ENCODE measurements at regions of chr11 and their contacts with region 1.

Region 1: GRCh38 chr11:78961247-78961646 is 386.6 kb upstream of the NARS2 start:
- DNase-seq: peak; percentile 31
- H3K4me3 ChIP-seq: no peak overlapping the region
- H3K27ac ChIP-seq: no peak overlapping the region
- H3K4me1 ChIP-seq: peaks cover 0 to 7% (median 2%) of the 10 kb centered on the region in 4 donors
- H3K27me3 ChIP-seq: peaks cover 28% of the 10 kb centered on the region
- CTCF ChIP-seq: peak; percentile 27 to 68 (median 50)
- EP300 ChIP-seq: no peak
- POLR2A ChIP-seq: no peak

Region 2: GRCh38 chr11:78791254-78791653 is 170.0 kb before region 1 on chr11:
- in situ Hi-C with region 1: no loop called
- intact Hi-C with region 1: loop called (anchors 5 kb)
- DNase-seq: no peak
- H3K4me3 ChIP-seq: no peak overlapping the region
- H3K27ac ChIP-seq: no peak overlapping the region
- H3K4me1 ChIP-seq: peaks cover 0 to 6% (median 3%) of the 10 kb centered on the region in 4 donors
- H3K27me3 ChIP-seq: no peaks in the 10 kb centered on the region
- CTCF ChIP-seq: no peak
- EP300 ChIP-seq: no peak
- POLR2A ChIP-seq: no peak